Naive thymus-derived CD4-positive, alpha-beta T cell (primary cell): ENCODE measurements at regions of chr21 and their contacts with region 1.

Region 1: GRCh38 chr21:14545906-14546480 is at the start of gene SAMSN1:
- DNase-seq: peak in 8 of 9 donors; percentile 62 to 84 (median 78)
- ATAC-seq: peak; percentile 93
- H3K4me3 ChIP-seq: peak within 1 kb of the TSS; percentile 78
- H3K4me3 Mint-ChIP-seq: peak within 1 kb of the TSS; percentile 81 to 99 (median 93)
- H3K27ac ChIP-seq: peak within 1 kb of the TSS; percentile 82
- H3K27ac Mint-ChIP-seq: peak within 1 kb of the TSS; percentile 81 to 97 (median 93)
- H3K4me1 ChIP-seq: peaks cover 43 to 50% of the 10 kb centered on the region in 2 donors
- H3K4me1 Mint-ChIP-seq: peaks cover 31 to 79% (median 67%) of the 10 kb centered on the region in 7 donors
- H3K27me3 ChIP-seq: no peaks in the 10 kb centered on the region
- H3K27me3 Mint-ChIP-seq: no peaks in the 10 kb centered on the region
- total RNA-seq, gene SAMSN1: 27.5 to 136 (median 38.0) TPM

Region 2: DNA sequence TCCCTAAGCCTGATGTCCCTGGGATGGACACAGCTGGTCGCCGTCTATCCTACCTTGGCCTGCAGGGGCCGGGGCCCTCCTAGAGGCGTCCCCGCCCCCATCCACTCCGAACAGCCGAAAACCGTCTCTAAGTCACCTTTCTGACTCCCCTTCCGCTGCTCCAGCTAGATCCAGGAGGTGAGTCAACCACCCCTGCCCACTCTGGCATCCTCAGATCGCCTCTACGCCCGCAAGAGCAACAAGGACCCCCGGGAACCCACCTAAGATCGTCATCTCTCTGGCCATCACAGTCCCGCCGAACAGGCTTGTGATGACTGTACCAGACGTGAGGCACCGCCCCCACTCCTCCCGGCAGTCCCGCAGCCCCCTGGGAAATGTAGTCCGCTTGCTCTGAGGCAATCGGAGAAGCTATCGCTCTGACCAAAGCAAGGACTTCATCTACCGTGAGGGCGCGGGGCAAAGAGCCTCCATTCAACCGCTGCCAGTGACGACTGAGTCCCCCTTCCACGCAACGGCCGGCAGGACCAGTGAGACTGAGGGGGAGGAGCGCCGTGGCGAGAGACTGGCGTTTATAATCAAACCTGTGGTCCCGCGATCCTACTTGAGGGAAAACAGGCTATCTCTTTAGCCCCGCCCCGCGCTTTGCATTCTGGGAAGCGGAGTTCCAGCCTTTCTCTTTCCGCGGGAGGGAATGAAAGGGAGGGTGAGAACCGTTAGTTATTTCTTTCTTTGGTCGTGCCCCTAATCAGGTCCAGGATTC is 163.0 kb before region 1 on chr21 and contains the start of gene HSPA13:
- CTCF ChIA-PET with region 1: no interaction called
- POLR2A ChIA-PET with region 1: interaction called, 3 read pairs
- intact Hi-C with region 1: loop called (anchors 1 kb)
- DNase-seq: peak; percentile 88 to 99 (median 99)
- ATAC-seq: peak; percentile 97
- H3K4me3 ChIP-seq: peak within 1 kb of the TSS; percentile 93
- H3K4me3 Mint-ChIP-seq: peak within 1 kb of the TSS; percentile 93 to 100 (median 100)
- H3K27ac ChIP-seq: peak within 1 kb of the TSS; percentile 91
- H3K27ac Mint-ChIP-seq: peak within 1 kb of the TSS; percentile 93 to 100 (median 98)
- H3K4me1 ChIP-seq: peaks cover 8 to 25% of the 10 kb centered on the region in 2 donors
- H3K4me1 Mint-ChIP-seq: peaks cover 13 to 44% (median 41%) of the 10 kb centered on the region in 7 donors
- H3K27me3 ChIP-seq: no peaks in the 10 kb centered on the region
- H3K27me3 Mint-ChIP-seq: peaks cover 0 to 2% (median 0%) of the 10 kb centered on the region in 5 donors
- total RNA-seq, gene HSPA13: 16.9 to 38.1 (median 26.7) TPM

Region 3: GRCh38 chr21:14523234-14523633 is 22.8 kb before region 1 on chr21:
- CTCF ChIA-PET with region 1: no interaction called
- POLR2A ChIA-PET with region 1: interaction called, 3 read pairs
- intact Hi-C with region 1: loop called (anchors 1 to 2 kb)
- DNase-seq: peak in 1 of 9 donors; percentile 55
- ATAC-seq: peak; percentile 74
- H3K4me3 ChIP-seq: no peak overlapping the region
- H3K4me3 Mint-ChIP-seq: peak overlapping the region in 9 of 10 donors; percentile 22 to 85 (median 50)
- H3K27ac ChIP-seq: no peak overlapping the region
- H3K27ac Mint-ChIP-seq: peak overlapping the region in 6 of 9 donors; percentile 9 to 85 (median 72)
- H3K4me1 ChIP-seq: peaks cover 16 to 29% of the 10 kb centered on the region in 2 donors
- H3K4me1 Mint-ChIP-seq: peaks cover 32 to 74% (median 66%) of the 10 kb centered on the region in 7 donors
- H3K27me3 ChIP-seq: no peaks in the 10 kb centered on the region
- H3K27me3 Mint-ChIP-seq: no peaks in the 10 kb centered on the region

Region 4: DNA sequence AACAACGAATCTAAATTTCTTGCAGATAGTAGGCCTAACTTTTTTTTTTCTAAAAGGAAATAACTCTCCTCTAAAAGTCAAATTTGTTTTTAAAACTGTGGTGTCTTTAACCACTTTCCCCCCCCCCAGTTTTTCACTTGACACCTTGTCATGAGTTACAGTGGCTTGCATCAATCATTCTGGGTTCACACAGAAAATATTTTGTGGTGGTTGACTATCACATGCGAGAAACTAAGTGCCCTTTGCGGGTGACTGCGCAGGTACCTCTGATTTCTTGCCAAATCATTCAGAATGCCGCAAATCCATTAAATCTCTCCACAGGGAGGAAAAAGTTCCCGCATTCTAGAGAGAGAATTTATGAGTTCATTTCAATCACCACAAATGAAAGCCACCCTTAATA is 23.9 kb after region 1 on chr21:
- CTCF ChIA-PET with region 1: no interaction called
- POLR2A ChIA-PET with region 1: interaction called, 4 read pairs
- intact Hi-C with region 1: loop called in 1 of 2 experiments (anchors 2 kb)
- DNase-seq: no peak
- ATAC-seq: no peak
- H3K4me3 ChIP-seq: no peak overlapping the region
- H3K4me3 Mint-ChIP-seq: no peak overlapping the region
- H3K27ac ChIP-seq: no peak overlapping the region
- H3K27ac Mint-ChIP-seq: peak overlapping the region in 1 of 9 donors; percentile 69
- H3K4me1 ChIP-seq: no peaks in the 10 kb centered on the region
- H3K4me1 Mint-ChIP-seq: peaks cover 0 to 55% (median 1%) of the 10 kb centered on the region in 7 donors
- H3K27me3 ChIP-seq: no peaks in the 10 kb centered on the region
- H3K27me3 Mint-ChIP-seq: no peaks in the 10 kb centered on the region

Region 5: DNA sequence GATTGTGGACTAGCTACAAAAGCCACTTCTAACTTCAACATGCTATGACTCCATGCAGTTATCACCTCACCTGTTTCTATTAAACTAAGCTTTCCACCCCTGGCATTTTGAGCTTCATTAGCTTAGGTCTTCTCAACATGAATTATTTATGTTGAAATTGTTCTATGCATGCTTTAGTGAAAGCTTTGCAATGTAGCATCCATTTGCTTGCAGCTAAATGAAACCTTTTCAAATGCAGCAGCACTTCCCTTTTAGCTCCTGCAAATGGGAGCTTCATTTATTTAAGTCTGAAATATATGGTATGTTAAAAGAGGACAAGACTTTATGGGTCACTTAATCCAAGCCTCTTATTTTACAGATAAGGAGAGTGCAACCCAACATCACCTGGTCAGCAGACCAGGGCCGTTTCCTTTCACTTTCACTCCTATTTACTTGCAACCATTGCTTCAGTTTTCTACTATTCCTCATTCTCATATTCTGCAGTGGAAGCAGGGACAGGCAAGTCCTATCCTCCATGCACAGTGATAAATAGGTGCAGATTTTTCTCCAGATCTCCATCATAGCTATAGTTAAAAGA is 56.5 kb after region 1 on chr21:
- CTCF ChIA-PET with region 1: no interaction called
- POLR2A ChIA-PET with region 1: no interaction called
- intact Hi-C with region 1: loop called in 1 of 2 experiments (anchors 2 kb)
- DNase-seq: no peak
- ATAC-seq: no peak
- H3K4me3 ChIP-seq: peak overlapping the region; percentile 46
- H3K4me3 Mint-ChIP-seq: peak overlapping the region; percentile 11 to 82 (median 62)
- H3K27ac ChIP-seq: no peak overlapping the region
- H3K27ac Mint-ChIP-seq: peak overlapping the region in 7 of 9 donors; percentile 3 to 80 (median 58)
- H3K4me1 ChIP-seq: peaks cover 10 to 11% of the 10 kb centered on the region in 2 donors
- H3K4me1 Mint-ChIP-seq: peaks cover 14 to 48% (median 27%) of the 10 kb centered on the region in 7 donors
- H3K27me3 ChIP-seq: no peaks in the 10 kb centered on the region
- H3K27me3 Mint-ChIP-seq: no peaks in the 10 kb centered on the region

Region 6: DNA sequence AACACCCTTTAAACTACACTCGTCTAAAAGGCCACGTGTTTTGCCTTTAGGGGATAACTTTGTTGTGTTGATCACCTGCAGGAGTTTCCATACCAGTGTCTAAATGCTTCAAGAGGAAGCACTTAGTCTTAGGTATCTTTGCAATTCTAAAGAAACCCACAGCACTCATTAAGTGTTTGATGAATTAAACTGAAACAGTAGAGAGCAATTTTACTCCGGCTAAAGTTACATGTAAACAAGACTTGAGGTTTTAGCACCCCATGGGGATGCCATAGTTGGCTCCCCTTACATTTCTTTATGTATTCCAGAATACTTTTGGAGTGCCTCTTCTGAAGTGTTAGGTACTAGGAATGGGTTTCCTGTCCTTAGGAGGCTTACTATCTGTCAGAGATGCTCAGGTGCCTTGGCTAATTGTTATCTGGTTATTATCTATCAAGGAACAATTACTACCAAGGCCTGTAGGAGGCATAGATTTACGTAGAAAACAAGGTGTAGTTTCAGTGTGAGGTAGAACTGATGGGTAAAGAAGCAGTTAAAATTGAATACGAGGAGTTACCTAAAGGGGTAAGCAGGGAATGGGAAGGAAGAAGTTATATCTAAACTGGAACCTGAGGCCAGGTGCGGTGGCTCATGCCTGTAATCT is 177.0 kb after region 1 on chr21:
- CTCF ChIA-PET with region 1: no interaction called
- POLR2A ChIA-PET with region 1: no interaction called
- intact Hi-C with region 1: loop called in 1 of 2 experiments (anchors 5 kb)
- DNase-seq: no peak
- ATAC-seq: no peak
- H3K4me3 ChIP-seq: no peak overlapping the region
- H3K4me3 Mint-ChIP-seq: no peak overlapping the region
- H3K27ac ChIP-seq: no peak overlapping the region
- H3K27ac Mint-ChIP-seq: peak overlapping the region in 1 of 9 donors; percentile 71
- H3K4me1 ChIP-seq: no peaks in the 10 kb centered on the region
- H3K4me1 Mint-ChIP-seq: peaks cover 0 to 31% (median 5%) of the 10 kb centered on the region in 7 donors
- H3K27me3 ChIP-seq: no peaks in the 10 kb centered on the region
- H3K27me3 Mint-ChIP-seq: no peaks in the 10 kb centered on the region

Region 7: DNA sequence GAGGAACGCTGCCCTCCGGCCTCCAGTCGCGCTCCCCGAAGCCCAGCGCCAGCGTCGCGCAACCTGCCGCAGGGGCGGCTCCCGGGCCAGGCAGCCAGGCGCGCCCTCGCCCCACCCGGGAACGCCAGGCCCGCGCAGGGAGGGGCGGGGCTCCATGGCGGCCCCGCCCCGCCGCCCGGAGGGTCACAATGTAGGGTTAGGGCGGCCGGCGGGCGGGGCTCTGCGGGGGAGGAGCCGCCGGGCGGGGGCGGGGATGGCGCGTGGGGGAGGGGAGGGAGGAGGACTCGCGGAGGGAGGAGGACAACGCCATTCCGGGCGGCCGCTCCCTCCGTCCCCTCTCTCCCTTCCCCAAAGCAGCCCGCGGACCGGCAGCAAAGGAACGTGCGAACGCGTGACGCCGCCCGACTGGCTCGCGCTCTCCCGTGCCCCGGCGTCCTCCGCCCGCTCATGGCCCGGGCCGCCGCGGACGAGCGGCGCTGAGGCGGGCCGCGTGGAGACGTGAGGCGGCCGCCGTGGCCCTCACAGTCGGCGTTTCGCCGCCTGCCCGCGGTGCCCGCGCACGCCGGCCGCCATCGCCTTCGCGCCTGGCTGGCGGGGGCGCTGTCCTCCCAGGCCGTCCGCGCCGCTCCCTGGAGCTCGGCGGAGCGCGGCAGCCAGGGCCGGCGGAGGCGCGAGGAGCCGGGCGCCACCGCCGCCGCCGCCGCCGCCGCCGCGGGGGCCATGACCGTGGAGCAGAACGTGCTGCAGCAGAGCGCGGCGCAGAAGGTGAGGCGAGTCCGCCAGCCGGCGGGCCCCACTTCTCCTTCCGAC is 1183.9 kb after region 1 on chr21 and contains the start of gene USP25:
- CTCF ChIA-PET with region 1: no interaction called
- POLR2A ChIA-PET with region 1: no interaction called
- intact Hi-C with region 1: loop called (anchors 2 to 5 kb)
- DNase-seq: peak; percentile 76 to 85 (median 82)
- ATAC-seq: peak; percentile 93
- H3K4me3 ChIP-seq: peak within 1 kb of the TSS; percentile 58
- H3K4me3 Mint-ChIP-seq: peak within 1 kb of the TSS; percentile 92 to 98 (median 97)
- H3K27ac ChIP-seq: peak within 1 kb of the TSS; percentile 83
- H3K27ac Mint-ChIP-seq: peak within 1 kb of the TSS; percentile 85 to 97 (median 94)
- H3K4me1 ChIP-seq: peaks cover 19 to 27% of the 10 kb centered on the region in 2 donors
- H3K4me1 Mint-ChIP-seq: peaks cover 9 to 45% (median 33%) of the 10 kb centered on the region in 7 donors
- H3K27me3 ChIP-seq: no peaks in the 10 kb centered on the region
- H3K27me3 Mint-ChIP-seq: peaks cover 0 to 33% (median 0%) of the 10 kb centered on the region in 5 donors
- total RNA-seq, gene USP25: 51.0 to 67.4 (median 56.5) TPM